ENCODE measurements at regions of chr4 and their contacts with region 1.

Region 1: DNA sequence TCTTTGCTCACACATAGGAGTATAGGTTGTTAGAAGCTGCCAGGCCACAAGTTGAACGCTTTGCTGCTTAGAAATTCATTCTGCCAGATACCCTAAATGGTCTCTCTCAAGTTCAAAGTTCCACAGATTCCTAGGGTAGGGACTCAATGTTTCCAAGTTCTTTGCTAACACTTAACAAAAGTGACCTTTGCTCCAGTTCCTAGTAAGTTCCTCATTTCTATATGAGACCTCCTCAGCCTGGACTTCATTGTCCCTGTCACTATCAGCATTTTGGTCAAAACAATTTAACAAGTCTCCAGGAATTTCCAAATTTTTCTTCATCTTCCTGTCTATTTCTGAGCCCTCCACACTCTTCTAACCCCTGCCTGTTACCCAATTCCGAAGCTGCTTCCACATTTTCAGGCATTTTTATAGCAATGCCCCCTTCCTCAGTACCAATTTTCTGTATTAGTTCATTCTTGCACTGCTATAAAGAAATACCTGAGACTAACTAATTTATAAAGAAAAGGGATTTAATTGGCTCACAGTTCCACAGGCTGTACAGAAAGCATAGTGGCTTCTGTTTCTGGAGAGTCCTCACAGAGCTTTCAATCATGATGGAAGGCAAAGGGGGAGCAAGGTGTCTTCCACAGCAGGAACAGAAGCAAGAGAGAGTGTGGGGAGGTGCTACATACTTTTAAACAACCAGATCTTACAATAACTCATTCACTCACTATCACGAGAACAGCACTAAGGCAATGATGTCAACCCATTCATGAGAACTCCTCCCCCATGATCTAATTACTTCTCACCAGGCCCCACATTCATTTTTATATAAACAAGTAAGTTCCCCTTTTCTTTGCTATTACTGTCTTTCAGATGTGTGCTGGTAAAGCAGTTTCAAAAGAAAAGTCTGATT is 11.5 kb upstream of the TLR1 start:
- DNase-seq: no peak
- CTCF ChIP-seq: no peak

Region 2: GRCh38 chr4:38582889-38583470 is 233.2 kb before region 1 on chr4:
- CTCF ChIA-PET with region 1: no interaction called
- POLR2A ChIA-PET with region 1: no interaction called
- DNase-seq: no peak
- CTCF ChIP-seq: no peak

Region 3: GRCh38 chr4:38782452-38783108 is 33.6 kb before region 1 on chr4 and contains the start of gene TLR10:
- CTCF ChIA-PET with region 1: interaction called, 25 read pairs
- POLR2A ChIA-PET with region 1: interaction called, 6 read pairs
- DNase-seq: peak; percentile 67
- CTCF ChIP-seq: peak; percentile 55

Region 4: DNA sequence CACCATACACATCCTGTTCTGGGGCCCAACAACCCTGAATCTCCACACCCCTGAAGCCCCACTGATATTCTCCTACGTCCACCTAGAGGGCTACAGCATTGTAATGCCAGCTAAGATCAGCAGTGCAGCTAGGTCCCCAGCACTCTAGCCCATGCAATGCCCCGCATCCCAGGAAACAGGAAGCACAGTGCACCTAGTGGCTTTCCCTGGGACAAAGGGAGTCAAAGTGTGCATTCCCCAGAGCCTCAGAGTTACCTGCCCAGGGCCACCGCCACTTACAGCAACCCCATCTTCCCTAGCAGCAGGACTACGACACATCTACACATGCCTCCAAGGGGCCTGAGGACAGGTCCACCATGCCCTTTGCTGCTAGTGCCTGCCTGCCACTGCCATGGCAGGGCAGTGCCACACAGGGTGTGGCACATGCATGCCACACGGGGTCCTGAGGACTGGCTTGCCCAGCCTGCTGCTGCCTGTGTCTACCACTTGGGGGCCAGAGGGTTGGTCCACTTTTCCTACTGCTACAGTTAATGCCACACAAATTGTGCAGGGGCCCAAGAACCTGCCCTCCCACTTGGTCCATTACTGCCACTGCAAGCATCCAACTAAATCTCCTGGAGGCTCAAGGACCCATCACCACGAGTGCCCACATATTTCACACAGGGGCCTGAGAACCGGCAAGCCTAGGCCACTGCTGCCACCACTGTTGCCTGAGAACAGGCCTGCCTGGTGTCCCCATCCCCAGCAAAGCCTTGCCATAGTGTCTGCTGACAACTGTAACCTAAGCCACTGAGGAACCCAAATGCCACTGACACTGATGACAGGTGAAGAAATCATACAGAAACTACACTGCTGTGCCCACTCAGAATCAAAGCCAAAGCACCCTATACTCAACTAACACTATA is 16.7 kb after region 1 on chr4:
- CTCF ChIA-PET with region 1: interaction called, 13 read pairs
- POLR2A ChIA-PET with region 1: no interaction called
- DNase-seq: no peak
- CTCF ChIP-seq: no peak

Measured in GM10248 (cell line).